ENCODE measurements at regions of chr12 and their contacts with region 1.

Region 1: GRCh38 chr12:89345830-89346740 is 6.2 kb downstream of the DUSP6 start:
- DNase-seq: peak in 4 of 5 donors; percentile 70 to 91 (median 80)
- H3K4me3 ChIP-seq: peak overlapping the region in 1 of 3 donors; percentile 4
- H3K27ac ChIP-seq: peak overlapping the region; percentile 8 to 20
- H3K4me1 ChIP-seq: peaks cover 3 to 23% (median 21%) of the 10 kb centered on the region in 3 donors
- H3K27me3 ChIP-seq: no peaks in the 10 kb centered on the region
- CTCF ChIP-seq: no peak

Region 2: DNA sequence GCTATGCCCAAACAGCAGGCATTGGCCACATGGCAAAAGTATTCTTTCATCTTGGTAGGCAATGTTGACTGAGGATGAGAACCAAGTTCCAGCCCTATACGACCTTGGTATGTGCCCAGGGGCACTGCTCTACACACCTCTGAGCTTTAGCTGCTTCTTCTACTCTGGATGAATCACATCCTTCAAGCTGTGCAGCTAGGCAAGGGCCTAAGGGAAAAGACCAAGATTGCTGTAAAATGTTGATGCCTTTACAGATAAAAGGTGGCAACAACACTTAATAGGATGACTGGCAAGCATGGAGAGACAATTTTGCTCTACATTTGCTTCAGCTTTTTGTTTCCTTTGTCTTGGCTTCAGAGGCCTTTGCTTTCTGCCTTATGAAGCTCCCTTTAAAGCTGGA is 582.5 kb before region 1 on chr12:
- intact Hi-C with region 1: no loop called
- DNase-seq: no peak
- H3K4me3 ChIP-seq: no peak overlapping the region
- H3K27ac ChIP-seq: no peak overlapping the region
- H3K4me1 ChIP-seq: no peaks in the 10 kb centered on the region
- H3K27me3 ChIP-seq: no peaks in the 10 kb centered on the region
- CTCF ChIP-seq: no peak

Region 3: DNA sequence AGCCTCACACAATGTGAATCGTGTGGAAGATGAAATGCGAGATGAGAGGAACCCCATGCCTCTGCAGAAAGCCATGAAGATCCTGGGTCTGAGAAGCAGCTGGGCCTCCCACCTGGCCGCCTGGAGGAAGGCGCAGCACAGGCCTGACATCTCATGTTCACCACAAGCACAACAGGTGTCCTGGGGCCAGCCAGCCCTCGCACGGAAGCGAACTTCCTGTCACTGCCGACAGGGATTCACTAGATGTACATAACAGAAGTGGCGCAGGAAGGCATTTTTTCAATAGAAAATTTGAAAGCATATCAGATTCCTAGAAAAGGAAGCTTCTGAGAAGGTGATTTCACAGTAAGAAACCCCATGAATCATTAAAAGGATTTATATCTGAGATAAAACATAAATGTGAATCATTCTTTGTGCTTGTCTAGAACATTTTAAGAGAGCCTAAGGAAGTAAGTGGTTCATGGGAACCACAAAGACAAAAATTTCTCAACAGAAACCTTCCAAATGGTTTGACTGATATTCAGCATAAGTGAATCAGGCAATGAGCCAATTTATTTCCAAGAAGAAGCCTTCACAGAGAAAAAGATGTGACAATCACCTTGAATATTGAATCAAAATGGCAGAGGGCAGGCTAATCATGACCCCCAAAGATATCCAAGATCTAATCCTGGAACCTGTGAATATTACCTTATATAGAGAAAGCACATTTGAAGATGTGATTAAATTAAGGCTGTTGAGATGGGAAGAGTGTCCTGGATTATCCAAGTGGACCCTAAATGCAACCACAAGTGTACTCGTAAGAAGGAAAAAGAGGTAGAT is 305.7 kb before region 1 on chr12:
- intact Hi-C with region 1: loop called (anchors 10 kb)
- DNase-seq: peak in 3 of 5 donors; percentile 21 to 66 (median 23)
- H3K4me3 ChIP-seq: no peak overlapping the region
- H3K27ac ChIP-seq: no peak overlapping the region
- H3K4me1 ChIP-seq: no peaks in the 10 kb centered on the region
- H3K27me3 ChIP-seq: no peaks in the 10 kb centered on the region
- CTCF ChIP-seq: no peak

Measured in kidney (tissue), 22 donors.